ENCODE measurements at regions of chr16 and their contacts with region 1.

Region 1: DNA sequence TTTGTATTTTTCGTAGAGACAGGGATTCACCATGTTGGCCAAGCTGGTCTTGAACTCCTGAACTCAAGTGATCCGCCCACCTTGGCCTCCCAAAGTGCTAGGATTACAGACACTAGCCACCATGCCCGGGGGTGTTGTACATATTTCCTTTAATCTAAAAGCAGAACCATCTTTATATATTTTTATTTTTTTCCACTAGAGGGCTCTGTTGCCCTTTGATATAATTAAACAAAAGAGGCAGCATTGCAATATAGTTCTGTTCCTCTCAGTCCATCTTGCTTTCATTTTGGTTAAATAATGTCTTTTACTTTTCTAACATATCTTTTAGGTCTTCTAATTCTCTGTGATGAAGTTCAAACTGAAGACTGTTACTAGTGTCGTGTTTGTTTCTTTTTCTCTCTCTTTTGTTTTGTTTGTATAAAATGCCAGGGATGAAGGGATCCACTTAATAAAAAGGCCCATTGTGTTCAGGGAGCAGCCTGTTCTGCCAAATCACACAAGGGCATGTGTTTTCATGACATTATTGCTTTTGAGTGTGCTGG is 23.4 kb downstream of the WWOX start:
- DNase-seq: peak; percentile 12
- H3K4me3 Mint-ChIP-seq: no peak overlapping the region
- H3K27ac Mint-ChIP-seq: no peak overlapping the region
- H3K4me1 Mint-ChIP-seq: peaks cover 2% of the 10 kb centered on the region
- H3K27me3 Mint-ChIP-seq: no peaks in the 10 kb centered on the region

Region 2: DNA sequence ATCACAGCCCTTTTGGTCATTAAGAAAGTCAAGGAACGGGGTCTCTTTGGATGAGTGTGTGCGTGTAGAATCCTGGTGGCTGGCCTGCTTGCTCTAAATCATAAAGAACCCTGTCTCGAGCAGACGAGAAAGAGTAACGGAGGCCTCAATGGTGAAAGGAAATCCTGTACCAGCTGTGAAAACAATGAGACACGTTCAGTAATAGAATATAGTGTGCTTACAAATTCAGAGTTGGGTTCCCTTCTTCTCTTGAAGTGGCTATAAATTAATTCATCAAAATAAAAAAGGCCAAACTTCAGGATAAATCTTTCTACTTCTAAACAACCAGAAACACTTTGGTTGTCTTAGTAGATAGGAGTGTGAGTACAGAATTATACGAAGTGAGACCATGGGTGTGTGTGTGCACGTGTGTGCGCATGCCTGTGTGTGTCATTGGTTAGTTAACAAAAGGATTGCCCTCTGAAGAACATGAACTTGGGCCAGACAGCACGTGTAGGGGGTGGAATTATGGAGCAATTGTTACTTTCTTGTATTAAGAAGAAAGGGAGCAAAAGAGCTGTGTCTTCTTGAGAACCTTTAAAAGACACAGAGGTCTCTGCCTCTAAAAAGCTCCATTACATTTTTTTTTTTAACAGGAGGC is 25.2 kb after region 1 on chr16:
- CTCF ChIA-PET with region 1: no interaction called
- intact Hi-C with region 1: no loop called
- DNase-seq: no peak
- H3K4me3 Mint-ChIP-seq: no peak overlapping the region
- H3K27ac Mint-ChIP-seq: no peak overlapping the region
- H3K4me1 Mint-ChIP-seq: no peaks in the 10 kb centered on the region
- H3K27me3 Mint-ChIP-seq: no peaks in the 10 kb centered on the region

Region 3: DNA sequence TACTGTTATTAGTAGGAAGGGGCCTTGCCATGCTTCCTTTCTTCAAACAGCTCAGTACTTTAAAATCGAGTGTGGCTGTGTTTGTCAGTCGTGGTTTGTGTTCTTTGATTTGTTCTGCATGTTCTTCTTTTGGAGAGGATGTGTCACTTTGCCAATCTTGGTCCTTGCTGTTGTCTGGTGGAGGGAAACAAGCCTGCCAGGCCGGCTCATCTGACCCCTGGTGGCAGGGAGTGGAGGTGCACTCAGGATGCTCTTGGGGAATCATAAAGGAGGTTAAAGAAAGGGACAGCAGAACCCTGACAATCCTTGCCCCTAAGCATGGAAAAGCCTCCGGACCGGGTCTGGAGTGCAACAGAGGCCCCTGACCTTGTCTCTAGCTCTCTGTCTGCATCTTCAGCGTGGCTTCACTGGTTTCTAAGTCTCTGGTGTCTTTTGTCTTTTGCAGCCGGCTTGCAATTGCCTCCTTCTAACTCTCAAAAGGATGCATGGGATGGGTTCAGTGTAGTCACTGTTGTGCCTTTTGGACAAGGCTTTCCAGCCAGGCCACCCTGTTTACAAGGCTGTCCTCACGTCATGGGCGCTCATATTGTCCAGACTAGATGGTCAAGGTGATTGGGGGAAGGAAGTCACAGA is 112.4 kb after region 1 on chr16:
- CTCF ChIA-PET with region 1: interaction called, 6 read pairs
- intact Hi-C with region 1: loop called (anchors 1 kb)
- DNase-seq: peak; percentile 75
- H3K4me3 Mint-ChIP-seq: no peak overlapping the region
- H3K27ac Mint-ChIP-seq: no peak overlapping the region
- H3K4me1 Mint-ChIP-seq: no peaks in the 10 kb centered on the region
- H3K27me3 Mint-ChIP-seq: no peaks in the 10 kb centered on the region

Region 4: GRCh38 chr16:78437352-78437968 is 314.6 kb after region 1 on chr16:
- CTCF ChIA-PET with region 1: interaction called, 5 read pairs
- intact Hi-C with region 1: loop called (anchors 10 kb)
- DNase-seq: peak; percentile 38
- H3K4me3 Mint-ChIP-seq: no peak overlapping the region
- H3K27ac Mint-ChIP-seq: no peak overlapping the region
- H3K4me1 Mint-ChIP-seq: no peaks in the 10 kb centered on the region
- H3K27me3 Mint-ChIP-seq: no peaks in the 10 kb centered on the region

Region 5: GRCh38 chr16:78503602-78504001 is 380.8 kb after region 1 on chr16:
- CTCF ChIA-PET with region 1: no interaction called
- intact Hi-C with region 1: loop called (anchors 5 kb)
- DNase-seq: peak; percentile 71
- H3K4me3 Mint-ChIP-seq: no peak overlapping the region
- H3K27ac Mint-ChIP-seq: no peak overlapping the region
- H3K4me1 Mint-ChIP-seq: no peaks in the 10 kb centered on the region
- H3K27me3 Mint-ChIP-seq: no peaks in the 10 kb centered on the region

Region 6: GRCh38 chr16:78770353-78771091 is 647.7 kb after region 1 on chr16:
- CTCF ChIA-PET with region 1: no interaction called
- intact Hi-C with region 1: loop called (anchors 1 kb)
- DNase-seq: peak; percentile 84
- H3K4me3 Mint-ChIP-seq: no peak overlapping the region
- H3K27ac Mint-ChIP-seq: no peak overlapping the region
- H3K4me1 Mint-ChIP-seq: peaks cover 18% of the 10 kb centered on the region
- H3K27me3 Mint-ChIP-seq: no peaks in the 10 kb centered on the region

Measured in activated naive CD4-positive, alpha-beta T cell treated with anti-CD3 and anti-CD28 coated beads for 36 hours (primary cell).